ENCODE measurements at regions of chr7 and their contacts with region 1.

Region 1: DNA sequence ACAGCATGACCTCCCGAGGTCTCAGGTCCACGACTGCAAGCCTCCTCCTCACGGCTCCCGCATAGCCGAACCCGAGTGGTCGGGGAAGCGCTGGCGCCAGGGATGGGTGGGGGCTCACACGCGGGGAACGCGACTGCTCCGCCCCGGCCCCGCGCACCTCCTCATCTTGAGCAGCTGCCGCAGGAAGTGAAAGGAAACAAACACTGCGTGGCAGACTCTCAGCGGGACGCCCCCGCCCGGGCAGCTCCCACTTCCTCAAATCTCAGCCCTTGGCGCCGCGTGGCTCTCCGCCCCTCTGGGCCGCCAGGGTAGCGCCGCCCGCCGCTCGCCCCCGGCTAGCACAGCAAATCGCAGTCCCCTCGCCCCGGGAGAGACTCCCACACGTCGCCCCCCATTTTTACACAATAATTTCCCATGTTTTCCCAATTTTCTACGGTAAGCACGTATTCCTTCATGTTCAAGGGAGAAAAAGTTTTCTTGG is at the start of gene TMEM243:
- DNase-seq: peak; percentile 95
- H3K4me3 Mint-ChIP-seq: peak within 1 kb of the TSS; percentile 99
- H3K27ac Mint-ChIP-seq: peak within 1 kb of the TSS; percentile 99
- H3K4me1 Mint-ChIP-seq: peaks cover 33% of the 10 kb centered on the region
- H3K27me3 Mint-ChIP-seq: peaks cover 11% of the 10 kb centered on the region
- total RNA-seq, gene TMEM243: 46.1 and 48.0 TPM in 2 replicates

Region 2: DNA sequence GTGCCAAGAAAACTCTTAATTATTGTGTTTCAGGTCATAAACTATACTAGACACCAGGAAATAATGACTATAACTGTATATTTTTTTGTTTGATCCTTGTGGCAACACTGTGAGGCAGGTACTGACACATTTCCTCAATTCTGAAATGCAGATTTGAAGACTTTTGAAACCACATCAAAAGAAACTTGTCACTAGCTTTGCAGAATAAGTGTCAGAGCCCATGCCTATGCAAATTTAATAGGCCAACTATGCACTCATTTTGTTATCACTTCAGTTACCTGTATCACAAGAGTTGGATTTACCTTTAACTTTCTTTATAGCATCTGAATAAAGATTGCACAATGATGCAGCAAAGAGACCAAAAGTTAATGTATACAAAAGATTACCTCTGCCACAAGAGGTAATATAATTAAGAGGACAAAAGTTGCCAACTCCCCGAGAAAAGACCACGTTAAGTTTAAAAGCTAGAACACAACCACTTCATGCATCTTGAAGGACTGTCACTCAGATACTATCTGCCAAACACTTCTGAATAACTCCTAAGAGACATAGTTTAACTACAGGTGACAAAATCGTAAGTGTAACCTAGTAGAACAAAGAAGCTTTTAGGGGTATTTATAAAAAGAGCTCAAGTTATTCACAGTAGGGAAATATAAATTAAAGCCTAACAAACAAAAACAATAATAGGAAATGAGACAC is 240.6 kb before region 1 on chr7:
- intact Hi-C with region 1: loop called (anchors 5 kb)
- DNase-seq: peak; percentile 61
- H3K4me3 Mint-ChIP-seq: no peak overlapping the region
- H3K27ac Mint-ChIP-seq: peak overlapping the region; percentile 17
- H3K4me1 Mint-ChIP-seq: peaks cover 12% of the 10 kb centered on the region
- H3K27me3 Mint-ChIP-seq: peaks cover 2% of the 10 kb centered on the region

Region 3: DNA sequence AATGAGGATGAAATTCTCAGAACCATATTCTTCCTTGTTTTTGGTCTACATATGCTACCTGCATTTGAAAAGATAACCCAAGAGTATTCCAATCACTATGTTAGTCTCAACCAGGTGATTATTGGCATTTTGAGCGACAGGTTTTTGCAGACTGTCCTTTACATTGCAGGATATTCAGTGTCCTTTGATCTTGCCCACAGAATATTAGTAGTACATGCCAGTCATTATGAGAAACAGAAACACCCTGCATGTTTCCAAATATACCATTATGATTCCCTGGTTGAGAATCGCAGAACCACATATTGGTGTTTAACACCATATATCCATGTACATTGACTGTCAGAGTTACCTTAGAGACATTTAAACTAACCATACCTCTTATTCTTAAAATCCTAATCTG is 30.7 kb before region 1 on chr7:
- intact Hi-C with region 1: loop called (anchors 5 kb)
- DNase-seq: no peak
- H3K4me3 Mint-ChIP-seq: no peak overlapping the region
- H3K27ac Mint-ChIP-seq: peak overlapping the region; percentile 8
- H3K4me1 Mint-ChIP-seq: peaks cover 18% of the 10 kb centered on the region
- H3K27me3 Mint-ChIP-seq: no peaks in the 10 kb centered on the region

Region 4: DNA sequence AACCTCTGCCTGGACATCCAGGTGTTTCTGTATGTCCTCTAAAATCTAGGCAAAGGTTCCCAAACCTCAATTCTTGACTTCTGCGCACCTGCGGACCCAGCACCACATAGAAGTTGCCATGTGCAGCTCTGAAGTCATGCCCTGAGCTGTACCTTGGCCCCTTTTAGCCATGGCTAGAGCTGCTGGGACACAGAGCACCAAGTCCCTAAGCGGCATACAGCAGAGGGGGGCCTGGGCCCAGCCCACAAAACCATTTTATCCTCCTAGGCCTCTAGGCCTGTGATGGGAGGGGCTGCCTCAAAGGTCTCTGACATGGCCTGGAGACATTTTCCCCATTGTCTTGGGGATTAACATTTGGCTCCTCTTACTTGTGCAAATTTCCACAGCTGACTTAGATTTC is 14.7 kb before region 1 on chr7:
- intact Hi-C with region 1: loop called (anchors 1 kb)
- DNase-seq: peak; percentile 57
- H3K4me3 Mint-ChIP-seq: no peak overlapping the region
- H3K27ac Mint-ChIP-seq: no peak overlapping the region
- H3K4me1 Mint-ChIP-seq: peaks cover 21% of the 10 kb centered on the region
- H3K27me3 Mint-ChIP-seq: no peaks in the 10 kb centered on the region

Region 5: DNA sequence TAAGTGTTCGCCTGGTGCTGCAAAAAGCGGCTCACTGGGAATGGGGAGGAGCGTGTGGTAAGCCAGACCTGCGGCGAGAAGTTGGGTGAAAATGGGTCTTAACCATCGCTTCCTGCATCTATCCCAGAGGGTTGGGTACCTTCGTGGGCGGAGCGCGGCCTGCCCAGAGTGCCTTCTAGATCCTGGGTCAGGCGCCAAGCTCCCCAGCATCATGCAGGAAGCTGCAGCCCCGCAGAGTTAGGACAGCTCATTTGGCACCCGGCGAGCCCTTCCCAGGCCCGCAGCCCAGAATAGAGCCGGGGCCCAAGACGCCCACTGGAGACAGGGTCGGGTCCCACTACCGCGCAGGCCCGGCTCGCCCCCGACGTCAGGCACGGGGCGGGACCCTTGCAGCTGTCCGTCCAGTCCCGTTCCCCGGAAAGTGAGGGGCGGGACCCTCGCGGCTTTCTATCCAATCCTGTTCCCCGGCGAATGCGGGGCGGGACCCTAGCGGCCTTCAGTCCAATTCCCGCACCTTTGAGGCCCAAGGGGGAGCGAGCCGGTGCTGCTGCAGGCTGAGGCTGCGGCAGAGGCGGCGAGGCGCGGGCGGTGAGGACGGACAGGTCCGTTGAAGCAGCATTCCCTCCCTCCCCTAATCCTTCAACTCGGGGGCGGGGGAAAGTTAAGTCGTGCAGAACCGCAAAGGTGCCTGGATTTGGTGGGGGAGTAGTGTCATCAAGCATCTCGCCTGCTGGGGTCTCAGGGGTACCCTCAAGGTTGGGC is 125.8 kb after region 1 on chr7 and contains the start of gene CROT:
- intact Hi-C with region 1: loop called (anchors 1 kb)
- DNase-seq: peak; percentile 99
- H3K4me3 Mint-ChIP-seq: peak within 1 kb of the TSS; percentile 97
- H3K27ac Mint-ChIP-seq: peak within 1 kb of the TSS; percentile 95
- H3K4me1 Mint-ChIP-seq: peaks cover 46% of the 10 kb centered on the region
- H3K27me3 Mint-ChIP-seq: no peaks in the 10 kb centered on the region
- total RNA-seq, gene CROT: 6.2 and 7.1 TPM in 2 replicates

Region 6: DNA sequence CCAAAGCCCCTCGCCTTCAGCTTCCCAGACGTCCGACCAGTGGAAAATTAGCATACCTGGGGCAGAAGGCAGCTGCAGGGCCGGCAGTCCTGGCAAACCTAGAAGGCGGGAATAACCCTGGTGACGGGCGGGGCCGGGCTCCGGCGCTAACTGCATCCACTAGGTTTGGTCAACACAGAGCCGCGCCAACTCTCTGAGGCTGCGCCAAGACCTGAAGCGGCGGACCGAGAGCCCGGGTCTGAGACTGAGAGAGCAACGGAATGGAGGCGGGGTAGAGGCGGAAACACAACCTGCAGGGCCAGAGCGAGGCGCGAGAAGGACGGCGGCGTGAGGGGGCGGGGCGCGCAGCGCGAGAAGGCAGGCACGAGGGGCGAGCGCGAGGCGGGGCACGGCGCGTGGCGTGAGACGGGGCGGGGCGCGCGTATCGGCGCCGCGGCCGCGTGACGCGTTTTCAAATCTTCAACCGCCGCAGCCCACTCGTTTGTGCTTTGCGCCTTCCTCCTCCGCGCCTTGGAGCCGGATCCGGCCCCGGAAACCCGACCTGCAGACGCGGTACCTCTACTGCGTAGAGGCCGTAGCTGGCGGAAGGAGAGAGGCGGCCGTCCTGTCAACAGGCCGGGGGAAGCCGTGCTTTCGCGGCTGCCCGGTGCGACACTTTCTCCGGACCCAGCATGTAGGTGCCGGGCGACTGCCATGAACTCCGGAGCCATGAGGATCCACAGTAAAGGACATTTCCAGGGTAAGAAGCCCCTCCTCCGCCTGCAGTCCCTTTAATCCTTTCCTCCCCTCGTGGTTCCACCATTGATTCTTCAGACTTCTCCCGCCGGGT is 656.7 kb after region 1 on chr7 and contains the starts of genes DBF4 and SLC25A40:
- intact Hi-C with region 1: loop called (anchors 2 kb)
- DNase-seq: peak; percentile 99
- H3K4me3 Mint-ChIP-seq: peak within 1 kb of the TSS; percentile 88
- H3K27ac Mint-ChIP-seq: peak within 1 kb of the TSS; percentile 98
- H3K4me1 Mint-ChIP-seq: peaks cover 49% of the 10 kb centered on the region
- H3K27me3 Mint-ChIP-seq: no peaks in the 10 kb centered on the region
- total RNA-seq, gene DBF4: 65.7 and 74.8 TPM in 2 replicates
- total RNA-seq, gene SLC25A40: 43.3 and 51.0 TPM in 2 replicates